Activated CD4-positive, alpha-beta T cell treated with anti-CD3 and anti-CD28 coated beads, Interleukin-2, amount 10 ng/mL, durations not matched to agents 7 days and 5 days (primary cell): ENCODE measurements at regions of chr16 and their contacts with region 1.

Region 1: DNA sequence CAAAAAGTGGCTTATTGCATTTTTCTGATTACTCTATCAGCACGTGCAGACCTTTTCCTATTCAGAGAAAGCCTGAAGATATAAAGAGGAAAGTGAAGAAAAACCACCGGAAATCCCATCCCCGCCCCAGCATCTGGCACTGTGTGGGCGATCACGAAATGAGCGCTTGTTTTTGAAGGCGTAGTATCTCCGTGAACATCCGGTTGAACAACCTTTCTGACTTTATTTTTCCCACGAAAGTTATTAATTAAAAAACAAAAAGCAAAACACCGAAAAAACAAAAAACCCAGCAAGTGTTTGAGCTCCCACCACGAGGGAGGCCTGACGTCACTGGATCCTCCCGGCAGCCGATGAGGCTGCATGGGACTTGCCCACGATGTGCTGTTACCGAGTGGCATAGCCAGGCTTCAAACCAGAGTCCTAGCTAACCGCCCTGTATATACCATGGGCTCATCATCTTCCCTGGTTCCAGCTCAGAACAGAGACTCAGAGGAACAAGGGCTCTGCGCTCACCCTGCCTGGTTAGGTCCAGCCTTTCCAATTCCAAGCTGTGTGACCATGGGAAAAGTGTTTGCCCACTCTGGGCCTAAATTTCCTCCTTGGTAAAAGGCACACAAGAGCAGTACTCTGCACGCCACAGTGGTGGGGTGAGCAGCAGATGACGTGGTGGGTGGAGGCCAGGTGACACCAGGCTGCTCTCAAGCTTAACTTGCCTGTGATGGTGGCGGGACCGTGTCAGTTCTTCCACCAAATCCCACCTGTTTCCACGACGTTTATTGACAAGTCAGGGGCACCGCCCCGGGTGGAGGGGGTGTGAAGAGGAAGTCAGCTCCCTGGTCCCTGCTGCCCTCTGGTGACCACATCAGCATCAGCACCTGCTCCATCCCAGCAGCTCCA is 34.3 kb upstream of the IL21R start:
- DNase-seq: peak; percentile 90
- H3K4me3 Mint-ChIP-seq: peak overlapping the region; percentile 58
- H3K27ac Mint-ChIP-seq: peak overlapping the region; percentile 98
- H3K4me1 Mint-ChIP-seq: peaks cover 80% of the 10 kb centered on the region
- H3K27me3 Mint-ChIP-seq: no peaks in the 10 kb centered on the region

Region 2: GRCh38 chr16:27286451-27286850 is 81.3 kb before region 1 on chr16:
- CTCF ChIA-PET with region 1: interaction called, 3 read pairs
- POLR2A ChIA-PET with region 1: interaction called, 12 read pairs
- DNase-seq: no peak
- H3K4me3 Mint-ChIP-seq: no peak overlapping the region
- H3K27ac Mint-ChIP-seq: no peak overlapping the region
- H3K4me1 Mint-ChIP-seq: peaks cover 67% of the 10 kb centered on the region
- H3K27me3 Mint-ChIP-seq: no peaks in the 10 kb centered on the region

Region 3: DNA sequence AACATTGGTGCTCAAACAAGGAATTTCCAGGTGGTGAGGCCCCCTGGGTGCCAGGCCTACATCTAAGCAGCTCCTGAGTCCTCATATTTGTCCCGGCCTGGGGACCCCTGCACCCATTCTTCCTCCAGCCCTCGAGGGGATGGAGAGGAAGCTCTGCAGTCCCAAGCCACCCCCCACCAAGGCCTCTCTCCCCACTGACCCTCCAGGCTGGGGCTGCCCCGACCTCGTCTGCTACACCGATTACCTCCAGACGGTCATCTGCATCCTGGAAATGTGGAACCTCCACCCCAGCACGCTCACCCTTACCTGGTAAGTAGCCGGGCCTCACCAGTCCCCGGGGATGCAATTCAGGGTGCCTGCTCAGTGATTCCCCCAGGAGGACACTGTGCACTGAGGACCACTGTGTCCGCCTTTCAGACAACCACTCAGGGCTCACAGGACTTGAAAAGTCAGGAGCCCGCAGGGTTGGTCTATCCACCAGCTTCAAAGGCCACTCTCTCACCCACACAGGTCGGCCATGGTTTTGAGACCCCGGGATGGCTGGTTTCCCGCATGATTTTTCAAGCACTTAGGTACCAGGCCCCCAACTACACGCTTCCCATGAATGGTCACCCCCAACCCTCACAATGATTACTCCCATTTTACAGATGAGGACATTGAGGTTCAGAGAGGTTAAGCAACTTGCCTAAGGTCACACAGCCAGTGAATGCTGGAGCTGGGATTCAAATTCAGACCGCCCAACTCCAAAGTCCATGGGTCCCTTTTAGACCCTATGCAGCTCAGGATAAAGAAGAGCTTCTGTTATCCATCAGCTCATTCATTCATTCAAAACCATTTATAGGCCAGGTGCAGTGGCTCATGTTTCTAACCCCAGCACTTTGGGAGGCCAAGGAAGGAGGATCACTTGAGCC is 66.7 kb after region 1 on chr16:
- CTCF ChIA-PET with region 1: no interaction called
- POLR2A ChIA-PET with region 1: no interaction called
- DNase-seq: peak; percentile 5
- H3K4me3 Mint-ChIP-seq: no peak overlapping the region
- H3K27ac Mint-ChIP-seq: peak overlapping the region; percentile 56
- H3K4me1 Mint-ChIP-seq: peaks cover 31% of the 10 kb centered on the region
- H3K27me3 Mint-ChIP-seq: no peaks in the 10 kb centered on the region